HCT116 (cell line): ENCODE measurements at regions of chr7 and their contacts with region 1.

Region 1: GRCh38 chr7:116443101-116443523 is 56.4 kb upstream of the CAV2 start:
- DNase-seq: peak; percentile 97
- ATAC-seq: peak; percentile 72
- H3K4me3 ChIP-seq: peak overlapping the region; percentile 36 to 56; a peak in 3 of 4 replicates
- H3K27ac ChIP-seq: peak overlapping the region; percentile 97
- H3K4me1 ChIP-seq: peaks cover 59 to 97% of the 10 kb centered on the region in 2 experiments
- H3K27me3 ChIP-seq: no peaks in the 10 kb centered on the region
- CTCF ChIP-seq: no peak
- POLR2A ChIP-seq: no peak
- RAD21 ChIP-seq: peak; percentile 48

Region 2: DNA sequence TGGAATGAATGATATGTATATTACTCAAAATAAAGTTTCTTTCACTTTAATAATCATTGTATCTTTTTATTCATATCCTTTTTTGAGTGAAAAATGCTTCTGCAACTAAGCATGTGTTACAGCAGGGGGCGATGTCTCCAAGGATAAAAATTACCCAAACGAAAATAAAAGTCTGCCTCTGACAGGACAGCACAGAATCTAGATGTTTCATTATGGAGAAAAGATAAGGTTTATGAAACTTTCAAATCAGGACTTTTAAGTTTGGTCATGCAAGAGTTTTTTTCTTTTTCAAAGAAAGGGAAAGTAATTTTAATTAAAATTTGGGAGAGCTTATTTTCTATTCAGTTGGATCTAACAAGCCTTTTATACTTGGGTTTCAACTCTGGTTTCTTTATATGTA is 184.4 kb before region 1 on chr7:
- CTCF ChIA-PET with region 1: interaction called, 3 read pairs
- POLR2A ChIA-PET with region 1: interaction called, 7 read pairs
- RAD21 ChIA-PET with region 1: interaction called in 1 of 2 experiments, 6 read pairs
- intact Hi-C with region 1: loop called (anchors 5 kb)
- DNase-seq: peak; percentile 48
- ATAC-seq: no peak
- H3K4me3 ChIP-seq: no peak overlapping the region
- H3K27ac ChIP-seq: peak overlapping the region; percentile 74; the same call in 1 of the 2 replicates
- H3K4me1 ChIP-seq: peaks cover 43 to 58% of the 10 kb centered on the region in 2 experiments
- H3K27me3 ChIP-seq: no peaks in the 10 kb centered on the region
- CTCF ChIP-seq: peak; percentile 57 to 91 (median 81)
- POLR2A ChIP-seq: no peak
- RAD21 ChIP-seq: peak; percentile 96

Region 3: GRCh38 chr7:116354546-116355408 is 88.3 kb before region 1 on chr7:
- CTCF ChIA-PET with region 1: no interaction called
- POLR2A ChIA-PET with region 1: interaction called, 3 read pairs
- RAD21 ChIA-PET with region 1: no interaction called
- intact Hi-C with region 1: loop called (anchors 5 kb)
- DNase-seq: peak; percentile 96
- ATAC-seq: peak; percentile 75
- H3K4me3 ChIP-seq: peak overlapping the region; percentile 15 to 41
- H3K27ac ChIP-seq: peak overlapping the region; percentile 89
- H3K4me1 ChIP-seq: peaks cover 61 to 66% of the 10 kb centered on the region in 2 experiments
- H3K27me3 ChIP-seq: no peaks in the 10 kb centered on the region
- CTCF ChIP-seq: no peak
- POLR2A ChIP-seq: no peak
- RAD21 ChIP-seq: 0 out of 2 replicates have a peak, but pooled peaks have one; percentile 11

Region 4: GRCh38 chr7:116426428-116427156 is 16.5 kb before region 1 on chr7:
- CTCF ChIA-PET with region 1: interaction called, 3 read pairs
- POLR2A ChIA-PET with region 1: interaction called, 12 read pairs
- RAD21 ChIA-PET with region 1: interaction called in 1 of 2 experiments, 6 read pairs
- intact Hi-C with region 1: no loop called
- DNase-seq: peak; percentile 93
- ATAC-seq: peak; percentile 62
- H3K4me3 ChIP-seq: peak overlapping the region in 1 of 2 experiments; percentile 1; a peak in 2 of 4 replicates
- H3K27ac ChIP-seq: peak overlapping the region; percentile 98
- H3K4me1 ChIP-seq: peaks cover 72 to 90% of the 10 kb centered on the region in 2 experiments
- H3K27me3 ChIP-seq: no peaks in the 10 kb centered on the region
- CTCF ChIP-seq: no peak
- POLR2A ChIP-seq: no peak
- RAD21 ChIP-seq: no peak; the same call in 1 of the 2 replicates

Region 5: GRCh38 chr7:116461500-116461899 is 18.4 kb after region 1 on chr7:
- CTCF ChIA-PET with region 1: no interaction called
- POLR2A ChIA-PET with region 1: interaction called, 14 read pairs
- RAD21 ChIA-PET with region 1: no interaction called
- intact Hi-C with region 1: no loop called
- DNase-seq: no peak
- ATAC-seq: no peak
- H3K4me3 ChIP-seq: peak overlapping the region; percentile 15 to 30; a peak in 2 of 4 replicates
- H3K27ac ChIP-seq: peak overlapping the region; percentile 88; the same call in 1 of the 2 replicates
- H3K4me1 ChIP-seq: peaks cover 44 to 82% of the 10 kb centered on the region in 2 experiments
- H3K27me3 ChIP-seq: no peaks in the 10 kb centered on the region
- CTCF ChIP-seq: peak in 2 of 3 experiments; percentile 13 to 41; a peak in 3 of 6 replicates
- POLR2A ChIP-seq: no peak
- RAD21 ChIP-seq: no peak; the same call in 1 of the 2 replicates

Region 6: GRCh38 chr7:116511552-116512519 is 68.7 kb after region 1 on chr7:
- CTCF ChIA-PET with region 1: no interaction called
- POLR2A ChIA-PET with region 1: interaction called, 12 read pairs
- RAD21 ChIA-PET with region 1: no interaction called
- intact Hi-C with region 1: loop called (anchors 1 kb)
- DNase-seq: peak; percentile 85
- ATAC-seq: peak; percentile 71
- H3K4me3 ChIP-seq: peak overlapping the region; percentile 41 to 48
- H3K27ac ChIP-seq: peak overlapping the region; percentile 96
- H3K4me1 ChIP-seq: peaks cover 51 to 78% of the 10 kb centered on the region in 2 experiments
- H3K27me3 ChIP-seq: no peaks in the 10 kb centered on the region
- CTCF ChIP-seq: no peak
- POLR2A ChIP-seq: no peak
- RAD21 ChIP-seq: no peak